Activated CD8-positive, alpha-beta T cell treated with anti-CD3 and anti-CD28 coated beads for 36 hours (primary cell): ENCODE measurements at regions of chr12 and their contacts with region 1.

Region 1: GRCh38 chr12:92987362-92987761 is 58.3 kb upstream of the EEA1 start:
- DNase-seq: peak; percentile 14
- ATAC-seq: no peak
- H3K4me3 Mint-ChIP-seq: no peak overlapping the region
- H3K27ac Mint-ChIP-seq: peak overlapping the region; percentile 78
- H3K4me1 Mint-ChIP-seq: peaks cover 37% of the 10 kb centered on the region
- H3K27me3 Mint-ChIP-seq: peaks cover 1% of the 10 kb centered on the region
- CTCF ChIP-seq: peak; percentile 81

Region 2: DNA sequence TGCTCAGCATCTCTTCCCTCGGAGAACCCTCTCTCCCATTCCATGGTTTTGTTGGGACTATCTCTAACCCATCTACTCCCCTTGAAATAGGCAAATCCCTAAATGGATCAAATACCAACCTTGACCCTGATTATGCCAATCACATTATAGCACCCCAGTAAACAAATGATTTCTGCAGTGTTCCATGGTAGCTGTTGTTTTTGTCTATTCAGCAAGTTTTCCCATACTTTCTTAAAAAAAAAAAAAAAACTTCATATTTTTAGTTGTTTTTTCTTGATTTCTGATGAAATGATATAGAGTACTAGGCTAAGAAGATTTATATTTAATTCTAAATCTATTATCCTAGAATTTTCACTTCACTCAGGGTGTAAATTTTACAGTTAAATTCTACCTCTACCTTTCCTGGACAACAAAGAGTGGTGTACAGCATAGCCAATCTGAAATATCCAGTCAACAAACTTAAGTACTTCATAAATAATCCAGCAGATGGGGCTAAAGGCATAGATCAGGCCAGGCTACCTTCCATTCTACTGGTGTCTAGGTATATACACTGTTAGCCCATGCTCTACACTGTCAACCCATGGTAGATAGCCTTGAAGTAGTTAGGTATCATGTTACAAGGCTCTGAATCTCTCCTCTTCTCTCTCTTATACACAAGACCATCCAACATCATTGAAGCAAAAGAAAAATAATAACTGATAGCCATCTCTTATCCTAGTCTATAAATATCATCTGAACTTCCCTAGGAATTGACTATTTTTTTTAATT is 202.4 kb before region 1 on chr12:
- CTCF ChIA-PET with region 1: interaction called, 12 read pairs
- POLR2A ChIA-PET with region 1: no interaction called
- intact Hi-C with region 1: no loop called
- DNase-seq: peak; percentile 30
- ATAC-seq: peak; percentile 99
- H3K4me3 Mint-ChIP-seq: no peak overlapping the region
- H3K27ac Mint-ChIP-seq: peak overlapping the region; percentile 21
- H3K4me1 Mint-ChIP-seq: peaks cover 3% of the 10 kb centered on the region
- H3K27me3 Mint-ChIP-seq: no peaks in the 10 kb centered on the region
- CTCF ChIP-seq: peak; percentile 61

Region 3: DNA sequence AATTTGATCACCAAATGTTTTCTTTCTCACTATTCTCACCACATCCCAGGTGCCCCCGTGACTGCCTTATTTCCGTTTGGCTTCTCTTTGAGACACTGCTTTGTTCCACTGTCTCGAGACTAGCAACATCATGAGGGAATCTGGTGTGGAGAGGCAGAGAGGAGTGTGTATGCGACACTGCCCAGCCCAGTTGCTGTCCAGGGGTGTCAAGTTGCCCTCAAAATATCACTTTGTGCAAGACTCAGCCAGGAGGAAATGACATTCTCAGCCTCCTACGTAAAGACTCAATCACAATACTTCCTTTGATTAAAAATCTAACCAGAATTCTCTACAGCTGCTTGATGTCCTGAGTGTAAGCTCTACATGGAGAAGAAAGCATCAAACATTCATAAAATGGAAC is 10.0 kb before region 1 on chr12:
- CTCF ChIA-PET with region 1: interaction called, 16 read pairs
- POLR2A ChIA-PET with region 1: interaction called, 3 read pairs
- intact Hi-C with region 1: no loop called
- DNase-seq: no peak
- ATAC-seq: peak; percentile 37
- H3K4me3 Mint-ChIP-seq: no peak overlapping the region
- H3K27ac Mint-ChIP-seq: no peak overlapping the region
- H3K4me1 Mint-ChIP-seq: peaks cover 10% of the 10 kb centered on the region
- H3K27me3 Mint-ChIP-seq: peaks cover 1% of the 10 kb centered on the region
- CTCF ChIP-seq: no peak

Region 4: GRCh38 chr12:93378373-93379325 is 391.3 kb after region 1 on chr12:
- CTCF ChIA-PET with region 1: interaction called, 28 read pairs
- POLR2A ChIA-PET with region 1: interaction called, 3 read pairs
- intact Hi-C with region 1: no loop called
- DNase-seq: peak; percentile 76
- ATAC-seq: peak; percentile 65
- H3K4me3 Mint-ChIP-seq: peak overlapping the region; percentile 92
- H3K27ac Mint-ChIP-seq: peak overlapping the region; percentile 99
- H3K4me1 Mint-ChIP-seq: peaks cover 37% of the 10 kb centered on the region
- H3K27me3 Mint-ChIP-seq: no peaks in the 10 kb centered on the region
- CTCF ChIP-seq: no peak

Region 5: DNA sequence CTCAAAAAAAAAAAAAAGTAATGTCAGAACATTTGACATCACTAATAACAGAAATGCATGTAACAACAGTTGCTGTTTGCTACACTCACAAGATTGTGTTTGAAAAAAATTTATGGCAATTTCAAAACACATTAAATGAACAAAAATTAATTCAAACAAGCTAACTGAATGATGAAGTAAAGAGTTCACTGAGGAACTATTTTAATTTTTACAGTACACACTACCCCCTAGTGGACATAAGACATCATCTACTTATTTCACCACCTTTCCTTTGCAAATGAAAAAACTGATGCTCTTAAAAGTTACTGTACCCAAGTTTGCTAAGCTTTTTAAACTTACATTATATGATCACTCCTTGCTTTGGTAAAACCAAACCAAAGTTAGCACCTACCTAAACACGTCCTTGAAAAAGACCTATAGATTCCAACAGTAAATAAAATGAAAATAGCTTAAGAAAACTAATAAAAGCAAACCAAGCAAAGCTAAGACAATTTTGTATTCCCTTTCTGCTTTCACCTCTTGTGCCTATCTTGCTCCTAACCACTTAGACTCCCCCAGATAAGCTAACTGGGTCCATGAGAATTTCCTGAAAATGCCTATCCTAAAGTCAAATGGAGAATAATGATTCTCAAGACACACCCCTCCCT is 432.1 kb after region 1 on chr12:
- CTCF ChIA-PET with region 1: interaction called, 25 read pairs
- POLR2A ChIA-PET with region 1: interaction called, 5 read pairs
- intact Hi-C with region 1: no loop called
- DNase-seq: no peak
- ATAC-seq: peak; percentile 56
- H3K4me3 Mint-ChIP-seq: no peak overlapping the region
- H3K27ac Mint-ChIP-seq: peak overlapping the region; percentile 31
- H3K4me1 Mint-ChIP-seq: peaks cover 85% of the 10 kb centered on the region
- H3K27me3 Mint-ChIP-seq: no peaks in the 10 kb centered on the region
- CTCF ChIP-seq: peak; percentile 78